Vagina (tissue), 2 donors: ENCODE measurements at regions of chr3 and their contacts with region 1.

Region 1: DNA sequence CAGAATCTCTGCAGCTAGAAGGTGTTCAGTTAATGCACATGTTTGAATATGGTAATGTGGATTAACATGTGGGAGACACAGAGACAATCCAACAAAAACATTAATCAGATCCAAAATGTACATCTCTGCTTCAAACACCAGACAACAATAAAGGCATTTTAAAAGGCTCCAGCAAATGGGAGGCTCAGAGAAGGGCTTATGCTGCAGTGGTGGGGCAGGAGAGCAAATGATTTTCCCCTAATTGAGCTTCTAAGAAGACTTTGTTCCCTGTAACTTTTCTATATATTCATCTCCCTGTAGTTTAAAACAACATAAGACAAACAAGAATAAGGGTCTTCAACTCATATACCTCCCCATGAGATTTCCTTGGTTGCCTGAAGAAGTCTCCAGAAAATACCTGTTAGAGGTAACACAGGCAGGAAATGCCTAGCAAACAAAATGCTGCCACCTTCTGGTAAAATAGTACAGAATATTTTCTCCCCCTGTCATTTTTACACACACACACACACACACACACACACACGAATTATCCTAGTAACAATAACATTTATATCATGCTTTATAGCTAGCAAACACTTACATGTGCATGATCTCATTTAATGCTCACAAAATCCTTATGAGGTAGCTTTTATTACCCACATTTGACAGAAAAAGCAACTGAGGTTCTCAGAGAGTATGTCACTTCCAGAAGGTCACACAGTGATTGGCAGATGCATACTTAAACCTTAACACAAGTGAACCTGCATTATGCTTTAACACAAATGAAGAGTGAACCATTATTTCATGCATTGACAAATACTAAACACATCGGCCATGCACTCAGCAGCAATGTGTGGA is 123.4 kb upstream of the MB21D2 start:
- DNase-seq: no peak
- H3K4me3 ChIP-seq: no peak overlapping the region
- H3K27ac ChIP-seq: no peak overlapping the region
- H3K4me1 ChIP-seq: no peaks in the 10 kb centered on the region
- H3K27me3 ChIP-seq: no peaks in the 10 kb centered on the region
- CTCF ChIP-seq: peak; percentile 32 to 57 (median 42)
- POLR2A ChIP-seq: no peak

Region 2: GRCh38 chr3:192917404-192918274 is 123.4 kb before region 1 on chr3 and contains the start of gene MB21D2:
- intact Hi-C with region 1: loop called (anchors 5 kb)
- DNase-seq: peak in 1 of 2 donors; percentile 88
- H3K4me3 ChIP-seq: peak within 1 kb of the TSS; percentile 61 to 81
- H3K27ac ChIP-seq: peak within 1 kb of the TSS; percentile 91
- H3K4me1 ChIP-seq: peaks cover 19% of the 10 kb centered on the region
- H3K27me3 ChIP-seq: no peaks in the 10 kb centered on the region
- CTCF ChIP-seq: no peak
- POLR2A ChIP-seq: peak in 1 of 2 donors; percentile 20
- total RNA-seq, gene MB21D2: 5.6 TPM